Posterior vena cava (tissue), 2 donors: ENCODE measurements at regions of chr10 and their contacts with region 1.

Region 1: GRCh38 chr10:132654702-132655661 is 117.4 kb downstream of the INPP5A start:
- DNase-seq: peak; percentile 87

Region 2: DNA sequence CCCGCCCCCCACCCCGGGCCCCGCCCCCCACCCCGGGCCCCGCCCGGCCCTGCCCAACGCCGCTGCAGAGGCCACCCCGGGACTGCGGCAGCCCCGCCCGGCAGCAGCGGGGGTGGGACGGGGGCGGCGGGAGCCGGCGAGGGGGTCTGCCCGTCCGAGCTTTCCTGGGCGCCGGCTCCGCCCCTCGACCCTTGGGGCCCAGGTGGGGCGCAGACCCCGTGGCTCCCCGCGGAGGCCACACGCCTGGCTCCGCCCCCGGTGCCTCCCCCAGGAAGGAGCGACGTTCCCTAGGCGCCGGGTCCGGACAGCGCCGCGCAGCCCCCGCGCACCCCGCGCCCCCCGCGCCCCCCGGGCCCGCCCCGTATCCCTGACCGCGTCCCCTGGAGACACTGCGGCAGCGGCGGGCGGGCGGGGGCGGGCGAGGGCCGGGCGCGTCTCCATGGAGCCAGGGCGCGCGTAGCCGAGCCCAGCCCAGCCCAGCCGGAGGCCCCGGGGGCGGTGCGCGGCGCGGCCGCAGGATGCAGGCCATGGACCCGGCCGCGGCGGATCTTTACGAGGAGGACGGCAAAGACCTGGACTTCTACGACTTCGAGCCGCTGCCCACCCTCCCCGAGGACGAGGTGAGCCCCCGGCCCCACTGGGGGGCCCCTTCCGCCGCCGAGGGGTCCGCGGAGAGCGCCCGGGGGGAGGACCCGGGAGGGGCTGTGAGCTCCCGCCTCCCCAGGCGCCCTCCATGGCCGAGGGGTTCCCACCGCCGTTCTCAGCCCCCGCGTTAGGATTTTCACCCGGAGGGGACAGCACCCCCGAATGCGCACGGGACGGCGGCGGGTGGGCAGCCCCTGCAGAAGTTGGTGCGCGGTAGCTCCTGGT is 505.2 kb after region 1 on chr10 and contains the start of gene KNDC1:
- intact Hi-C with region 1: loop called in 1 of 2 experiments (anchors 5 kb)
- DNase-seq: peak; percentile 79
- total RNA-seq, gene KNDC1: 0.33 to 0.37 TPM